Gastrocnemius medialis (tissue), 4 donors: ENCODE measurements at regions of chr3 and their contacts with region 1.

Region 1: GRCh38 chr3:134212906-134213665 is 37.6 kb downstream of the RYK start:
- DNase-seq: peak; percentile 37 to 65
- ATAC-seq: peak; percentile 78 to 84
- H3K4me3 ChIP-seq: no peak overlapping the region
- H3K27ac ChIP-seq: no peak overlapping the region
- H3K4me1 ChIP-seq: peaks cover 4 to 18% of the 10 kb centered on the region in 2 donors
- H3K27me3 ChIP-seq: no peaks in the 10 kb centered on the region
- CTCF ChIP-seq: peak; percentile 77 to 98 (median 92)
- POLR2A ChIP-seq: no peak

Region 2: DNA sequence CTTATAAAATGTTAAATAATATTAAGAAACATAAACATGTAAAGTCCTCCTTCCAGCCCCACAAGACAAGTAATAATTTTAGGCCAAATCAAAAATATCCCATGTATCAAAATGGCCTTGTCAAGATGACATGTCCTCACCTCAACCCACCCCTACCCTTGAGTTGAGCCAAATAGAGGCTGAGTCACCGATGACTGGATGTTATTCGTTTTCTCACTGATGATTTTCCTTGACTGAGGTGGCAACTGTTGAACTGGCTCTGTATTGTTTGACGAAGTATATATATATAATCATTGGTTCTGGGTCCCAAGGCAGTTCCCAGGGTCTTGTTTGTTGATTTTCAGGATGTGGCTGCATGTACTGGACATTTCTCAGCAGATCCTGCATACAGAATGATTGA is 1099.6 kb before region 1 on chr3:
- in situ Hi-C with region 1: no loop called
- intact Hi-C with region 1: no loop called
- DNase-seq: no peak
- ATAC-seq: no peak
- H3K4me3 ChIP-seq: no peak overlapping the region
- H3K27ac ChIP-seq: no peak overlapping the region
- H3K4me1 ChIP-seq: no peaks in the 10 kb centered on the region
- H3K27me3 ChIP-seq: no peaks in the 10 kb centered on the region
- CTCF ChIP-seq: no peak
- POLR2A ChIP-seq: no peak

Region 3: GRCh38 chr3:134106580-134106979 is 106.5 kb before region 1 on chr3:
- in situ Hi-C with region 1: no loop called
- intact Hi-C with region 1: no loop called
- DNase-seq: no peak
- ATAC-seq: no peak
- H3K4me3 ChIP-seq: no peak overlapping the region
- H3K27ac ChIP-seq: no peak overlapping the region
- H3K4me1 ChIP-seq: no peaks in the 10 kb centered on the region
- H3K27me3 ChIP-seq: no peaks in the 10 kb centered on the region
- CTCF ChIP-seq: no peak
- POLR2A ChIP-seq: no peak

Region 4: DNA sequence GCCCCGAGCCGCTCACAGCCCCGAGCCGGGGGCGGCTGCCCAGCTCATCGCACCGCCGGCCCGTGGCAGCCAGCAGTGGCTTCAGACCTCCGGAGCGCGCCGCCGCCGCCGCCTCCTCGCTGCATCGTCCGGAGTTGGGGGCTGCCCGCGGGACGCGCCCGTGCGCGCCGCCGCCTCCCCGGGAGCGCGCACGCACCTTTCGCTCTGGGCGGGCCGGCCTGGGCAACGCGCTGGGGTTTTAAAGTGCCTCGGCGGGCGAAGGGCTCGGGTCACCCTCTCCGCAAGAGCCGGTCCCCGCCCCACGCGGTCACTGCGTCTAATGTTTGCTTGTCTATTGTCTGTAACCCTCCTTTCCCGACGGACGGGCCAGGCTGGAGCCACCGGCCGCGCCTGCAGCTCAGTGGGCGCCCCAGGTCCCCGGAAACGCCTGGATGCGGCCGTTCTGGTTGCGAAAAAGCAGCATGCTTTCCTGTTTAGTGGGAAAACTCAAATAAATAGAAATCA is 37.7 kb after region 1 on chr3 and contains the start of gene RYK:
- in situ Hi-C with region 1: no loop called
- intact Hi-C with region 1: loop called (anchors 5 kb)
- DNase-seq: peak; percentile 55 to 75
- ATAC-seq: peak; percentile 91 to 95
- H3K4me3 ChIP-seq: peak within 1 kb of the TSS; percentile 73 to 99 (median 86)
- H3K27ac ChIP-seq: peak within 1 kb of the TSS; percentile 83 to 96 (median 95)
- H3K4me1 ChIP-seq: peaks cover 10 to 12% of the 10 kb centered on the region in 2 donors
- H3K27me3 ChIP-seq: no peaks in the 10 kb centered on the region
- CTCF ChIP-seq: no peak
- POLR2A ChIP-seq: peak; percentile 65 to 79
- total RNA-seq, gene RYK: 25.8 to 42.4 (median 35.0) TPM

Region 5: GRCh38 chr3:134299185-134299887 is 86.2 kb after region 1 on chr3:
- in situ Hi-C with region 1: loop called in 2 of 4 experiments (anchors 10 kb)
- intact Hi-C with region 1: loop called (anchors 2 kb)
- DNase-seq: no peak
- ATAC-seq: peak in 1 of 2 donors; percentile 39
- H3K4me3 ChIP-seq: no peak overlapping the region
- H3K27ac ChIP-seq: no peak overlapping the region
- H3K4me1 ChIP-seq: no peaks in the 10 kb centered on the region
- H3K27me3 ChIP-seq: no peaks in the 10 kb centered on the region
- CTCF ChIP-seq: peak in 1 of 5 experiments; percentile 16
- POLR2A ChIP-seq: no peak

Region 6: GRCh38 chr3:134308350-134308891 is 95.3 kb after region 1 on chr3:
- in situ Hi-C with region 1: loop called in 3 of 4 experiments (anchors 5 to 10 kb)
- intact Hi-C with region 1: no loop called
- DNase-seq: peak; percentile 62 to 82
- ATAC-seq: peak; percentile 74 to 79
- H3K4me3 ChIP-seq: no peak overlapping the region
- H3K27ac ChIP-seq: peak overlapping the region; percentile 3 to 82 (median 22)
- H3K4me1 ChIP-seq: peaks cover 6 to 15% of the 10 kb centered on the region in 2 donors
- H3K27me3 ChIP-seq: no peaks in the 10 kb centered on the region
- CTCF ChIP-seq: peak; percentile 99 to 100 (median 99)
- POLR2A ChIP-seq: no peak

Region 7: GRCh38 chr3:134373994-134374790 is 161.1 kb after region 1 on chr3 and contains the start of gene AMOTL2:
- in situ Hi-C with region 1: no loop called
- intact Hi-C with region 1: loop called (anchors 2 kb)
- DNase-seq: peak; percentile 88 to 92
- ATAC-seq: peak; percentile 83 to 85
- H3K4me3 ChIP-seq: peak within 1 kb of the TSS; percentile 70 to 88 (median 77)
- H3K27ac ChIP-seq: peak within 1 kb of the TSS; percentile 93 to 99 (median 97)
- H3K4me1 ChIP-seq: peaks cover 37 to 63% of the 10 kb centered on the region in 2 donors
- H3K27me3 ChIP-seq: no peaks in the 10 kb centered on the region
- CTCF ChIP-seq: peak in 1 of 5 experiments; percentile 10
- POLR2A ChIP-seq: peak; percentile 75 to 88
- total RNA-seq, gene AMOTL2: 17.9 to 29.9 (median 20.6) TPM